ENCODE measurements at regions of chr9 and their contacts with region 1.

Region 1: GRCh38 chr9:124320062-124320973 is 62.6 kb downstream of the NEK6 start:
- DNase-seq: peak; percentile 67 to 76 (median 73)
- ATAC-seq: peak; percentile 63 to 89 (median 84)
- H3K4me3 ChIP-seq: no peak overlapping the region
- H3K27ac ChIP-seq: no peak overlapping the region
- H3K4me1 ChIP-seq: peaks cover 0 to 8% (median 1%) of the 10 kb centered on the region in 12 donors
- H3K27me3 ChIP-seq: no peaks in the 10 kb centered on the region
- CTCF ChIP-seq: peak; percentile 76 to 92 (median 85)
- POLR2A ChIP-seq: no peak

Region 2: DNA sequence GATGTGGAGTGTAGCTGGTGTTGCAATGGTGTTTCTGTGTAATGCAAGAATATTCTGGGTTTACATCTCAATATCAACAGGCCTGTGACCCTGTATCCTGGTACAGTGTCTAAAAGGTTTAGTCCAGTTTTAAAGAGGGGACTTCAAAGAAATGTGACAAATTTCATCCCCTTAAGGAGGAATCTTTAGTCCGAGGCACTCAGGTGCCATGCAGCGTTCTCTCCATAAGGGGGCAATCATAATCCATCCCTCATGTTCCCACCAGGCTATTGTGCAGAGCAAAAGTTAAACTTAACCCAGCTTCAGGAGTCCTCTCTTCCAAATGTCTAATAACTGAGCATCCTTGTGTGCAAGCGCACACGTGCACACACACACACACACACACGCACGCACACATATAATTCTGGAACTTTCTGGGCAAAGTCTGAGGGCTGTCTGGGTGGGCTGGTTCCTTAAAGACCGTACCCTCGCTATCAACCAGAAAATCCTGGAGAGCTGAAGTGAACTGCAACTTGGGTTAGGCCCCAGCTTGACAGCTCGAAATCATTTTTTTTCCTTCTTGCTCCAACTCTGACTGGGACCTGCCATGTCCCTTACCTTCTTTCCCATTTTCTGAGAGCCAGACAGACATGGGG is 918.3 kb before region 1 on chr9:
- intact Hi-C with region 1: loop called in 1 of 10 experiments (anchors 10 kb)
- DNase-seq: no peak
- ATAC-seq: peak; percentile 73 to 85 (median 82)
- H3K4me3 ChIP-seq: peak overlapping the region in 4 of 12 donors; percentile 19 to 31 (median 26)
- H3K27ac ChIP-seq: peak overlapping the region in 3 of 12 donors; percentile 9 to 53 (median 18)
- H3K4me1 ChIP-seq: peaks cover 0 to 10% (median 0%) of the 10 kb centered on the region in 12 donors
- H3K27me3 ChIP-seq: no peaks in the 10 kb centered on the region
- CTCF ChIP-seq: peak; percentile 43 to 78 (median 69)
- POLR2A ChIP-seq: no peak

Region 3: DNA sequence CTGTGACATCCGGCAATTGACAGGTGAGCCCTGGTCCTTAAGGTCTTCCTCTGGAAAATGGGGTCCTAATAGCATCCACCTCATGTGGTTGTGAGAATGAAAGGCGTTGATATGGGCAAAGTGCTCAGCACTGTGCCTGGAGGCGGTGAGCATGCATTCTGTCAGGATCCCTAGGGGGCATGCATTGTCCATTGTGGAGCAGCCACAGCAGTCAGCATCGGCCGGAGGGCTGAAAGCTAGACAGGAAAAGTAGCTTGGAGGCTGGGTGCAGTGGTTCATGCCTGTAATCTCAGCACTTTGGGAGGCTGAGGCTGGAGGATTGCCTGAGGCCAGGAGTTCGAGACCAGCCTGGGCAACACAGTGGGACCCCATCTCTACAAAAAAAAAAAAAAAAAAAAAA is 186.6 kb before region 1 on chr9:
- intact Hi-C with region 1: loop called in 4 of 10 experiments (anchors 1 to 5 kb)
- DNase-seq: peak in 4 of 5 donors; percentile 36 to 70 (median 44)
- ATAC-seq: peak; percentile 55 to 90 (median 74)
- H3K4me3 ChIP-seq: no peak overlapping the region
- H3K27ac ChIP-seq: no peak overlapping the region
- H3K4me1 ChIP-seq: no peaks in the 10 kb centered on the region
- H3K27me3 ChIP-seq: no peaks in the 10 kb centered on the region
- CTCF ChIP-seq: peak in 9 of 12 donors; percentile 21 to 55 (median 45)
- POLR2A ChIP-seq: no peak

Region 4: GRCh38 chr9:124257844-124258606 is 62.3 kb before region 1 on chr9 and contains the start of gene NEK6:
- intact Hi-C with region 1: loop called in 2 of 10 experiments (anchors 5 to 10 kb)
- DNase-seq: peak in 3 of 5 donors; percentile 51 to 76 (median 57)
- ATAC-seq: peak; percentile 14 to 62 (median 46)
- H3K4me3 ChIP-seq: peak within 1 kb of the TSS; percentile 56 to 98 (median 74)
- H3K27ac ChIP-seq: peak within 1 kb of the TSS; percentile 27 to 96 (median 68)
- H3K4me1 ChIP-seq: peaks cover 0 to 61% (median 26%) of the 10 kb centered on the region in 12 donors
- H3K27me3 ChIP-seq: no peaks in the 10 kb centered on the region
- CTCF ChIP-seq: no peak
- POLR2A ChIP-seq: no peak
- total RNA-seq, gene NEK6: 5.0 to 42.4 (median 6.8) TPM

Region 5: GRCh38 chr9:124392871-124393460 is 72.6 kb after region 1 on chr9:
- intact Hi-C with region 1: no loop called
- DNase-seq: no peak
- ATAC-seq: no peak
- H3K4me3 ChIP-seq: no peak overlapping the region
- H3K27ac ChIP-seq: no peak overlapping the region
- H3K4me1 ChIP-seq: peaks cover 0 to 79% (median 38%) of the 10 kb centered on the region in 12 donors
- H3K27me3 ChIP-seq: no peaks in the 10 kb centered on the region
- CTCF ChIP-seq: peak in 1 of 12 donors; percentile 12
- POLR2A ChIP-seq: no peak

Measured in heart left ventricle (tissue), 16 donors.